T-cell (primary cell): ENCODE measurements at regions of chr20 and their contacts with region 1.

Region 1: GRCh38 chr20:35592339-35592974 is 23.2 kb upstream of the SPAG4 start:
- DNase-seq: no peak
- ATAC-seq: no peak
- H3K4me3 ChIP-seq: no peak overlapping the region
- H3K4me3 Mint-ChIP-seq: no peak overlapping the region
- H3K27ac ChIP-seq: no peak overlapping the region
- H3K27ac Mint-ChIP-seq: no peak overlapping the region
- H3K4me1 ChIP-seq: no peaks in the 10 kb centered on the region
- H3K4me1 Mint-ChIP-seq: peaks cover 0 to 3% (median 0%) of the 10 kb centered on the region in 3 donors
- H3K27me3 ChIP-seq: no peaks in the 10 kb centered on the region
- H3K27me3 Mint-ChIP-seq: no peaks in the 10 kb centered on the region

Region 2: DNA sequence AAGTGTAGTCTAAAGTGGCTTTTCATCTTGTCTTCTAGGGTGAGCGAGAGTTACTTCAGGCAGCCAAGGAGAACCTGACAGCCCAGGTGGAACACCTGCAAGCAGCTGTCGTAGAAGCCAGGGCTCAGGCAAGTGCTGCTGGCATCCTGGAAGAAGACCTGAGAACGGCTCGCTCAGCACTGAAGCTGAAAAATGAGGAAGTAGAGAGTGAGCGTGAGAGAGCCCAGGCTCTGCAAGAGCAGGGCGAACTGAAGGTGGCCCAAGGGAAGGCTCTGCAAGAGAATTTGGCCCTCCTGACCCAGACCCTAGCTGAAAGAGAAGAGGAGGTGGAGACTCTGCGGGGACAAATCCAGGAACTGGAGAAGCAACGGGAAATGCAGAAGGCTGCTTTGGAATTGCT is 90.1 kb before region 1 on chr20:
- CTCF ChIA-PET with region 1: no interaction called
- POLR2A ChIA-PET with region 1: no interaction called
- DNase-seq: peak in 1 of 35 experiments; percentile 11
- ATAC-seq: no peak
- H3K4me3 ChIP-seq: no peak overlapping the region
- H3K4me3 Mint-ChIP-seq: no peak overlapping the region
- H3K27ac ChIP-seq: no peak overlapping the region
- H3K27ac Mint-ChIP-seq: peak overlapping the region in 1 of 2 donors; percentile 4
- H3K4me1 ChIP-seq: peaks cover 0 to 17% of the 10 kb centered on the region in 2 experiments
- H3K4me1 Mint-ChIP-seq: peaks cover 25 to 48% (median 43%) of the 10 kb centered on the region in 3 donors
- H3K27me3 ChIP-seq: no peaks in the 10 kb centered on the region
- H3K27me3 Mint-ChIP-seq: no peaks in the 10 kb centered on the region

Region 3: DNA sequence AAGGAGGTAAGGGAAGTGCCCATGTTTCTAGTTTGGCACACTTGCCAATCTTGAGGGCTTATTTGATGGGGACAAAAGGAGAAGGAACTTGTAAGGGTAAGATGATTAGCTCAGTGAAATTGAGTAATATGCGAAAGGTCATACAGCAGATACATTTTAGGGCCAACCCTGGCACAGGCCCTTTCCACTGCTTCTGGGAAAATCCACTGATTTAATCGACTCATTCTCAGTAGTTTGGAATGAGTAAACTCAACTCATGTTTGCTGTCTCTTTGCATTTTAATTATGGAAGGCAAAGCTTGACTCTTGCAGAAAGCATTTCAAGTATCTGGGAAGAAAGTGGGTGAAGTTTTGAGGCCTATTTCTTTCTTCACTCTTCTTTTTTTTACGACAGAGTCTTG is 199.4 kb after region 1 on chr20:
- CTCF ChIA-PET with region 1: no interaction called
- POLR2A ChIA-PET with region 1: interaction called in 1 of 2 experiments, 10 read pairs
- DNase-seq: no peak
- ATAC-seq: no peak
- H3K4me3 ChIP-seq: no peak overlapping the region
- H3K4me3 Mint-ChIP-seq: no peak overlapping the region
- H3K27ac ChIP-seq: no peak overlapping the region
- H3K27ac Mint-ChIP-seq: no peak overlapping the region
- H3K4me1 ChIP-seq: peaks cover 8 to 16% of the 10 kb centered on the region in 2 experiments
- H3K4me1 Mint-ChIP-seq: peaks cover 37 to 45% (median 40%) of the 10 kb centered on the region in 3 donors
- H3K27me3 ChIP-seq: no peaks in the 10 kb centered on the region
- H3K27me3 Mint-ChIP-seq: no peaks in the 10 kb centered on the region